Common myeloid progenitor, CD34-positive (primary cell): ENCODE measurements at regions of chr16 and their contacts with region 1.

Region 1: GRCh38 chr16:21184834-21185233 is 26.4 kb downstream of the LDAF1 start:
- DNase-seq: peak in 1 of 3 donors; percentile 27
- H3K4me3 ChIP-seq: no peak overlapping the region
- H3K27ac ChIP-seq: no peak overlapping the region
- H3K4me1 ChIP-seq: no peaks in the 10 kb centered on the region
- H3K27me3 ChIP-seq: no peaks in the 10 kb centered on the region

Region 2: GRCh38 chr16:21156767-21157467 is 27.9 kb before region 1 on chr16:
- CTCF ChIA-PET with region 1: interaction called, 10 read pairs
- POLR2A ChIA-PET with region 1: no interaction called
- DNase-seq: peak in 2 of 3 donors; percentile 12 to 28
- H3K4me3 ChIP-seq: no peak overlapping the region
- H3K27ac ChIP-seq: no peak overlapping the region
- H3K4me1 ChIP-seq: peaks cover 4 to 21% (median 18%) of the 10 kb centered on the region in 4 experiments
- H3K27me3 ChIP-seq: no peaks in the 10 kb centered on the region

Region 3: DNA sequence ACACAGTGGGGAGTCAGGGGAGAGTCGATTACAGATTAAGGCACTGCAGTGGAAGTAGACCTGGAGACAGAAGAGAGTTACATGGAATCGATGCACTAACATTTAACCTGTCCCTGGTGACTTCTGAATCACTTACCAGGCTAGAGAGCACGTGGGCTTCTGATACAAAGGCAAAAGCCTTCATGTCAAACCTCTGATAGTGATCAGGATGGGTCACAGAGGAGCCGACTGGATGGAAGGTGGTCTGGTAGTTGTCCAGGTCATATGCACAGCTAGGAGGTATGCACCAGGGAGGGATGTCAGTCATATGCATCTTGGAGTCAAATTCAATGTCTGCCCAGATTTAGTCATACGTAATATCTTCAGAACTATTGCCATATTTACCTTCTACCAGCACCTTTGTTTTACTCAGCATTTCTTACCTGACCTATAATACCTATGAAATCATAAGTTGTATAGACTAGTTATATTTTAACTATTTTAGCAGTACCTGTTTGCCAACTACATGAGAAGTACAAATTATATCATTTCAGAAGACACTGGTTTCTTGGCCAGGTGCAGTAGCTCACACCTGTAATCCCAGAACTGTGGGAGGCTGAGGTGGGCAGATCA is 14.9 kb after region 1 on chr16:
- CTCF ChIA-PET with region 1: interaction called, 11 read pairs
- POLR2A ChIA-PET with region 1: interaction called, 3 read pairs
- DNase-seq: no peak
- H3K4me3 ChIP-seq: no peak overlapping the region
- H3K27ac ChIP-seq: no peak overlapping the region
- H3K4me1 ChIP-seq: peaks cover 0 to 13% (median 1%) of the 10 kb centered on the region in 4 experiments
- H3K27me3 ChIP-seq: peaks cover 0 to 19% (median 2%) of the 10 kb centered on the region in 5 experiments